Colonic mucosa (tissue), 4 donors: ENCODE measurements at regions of chr1 and their contacts with region 1.

Region 1: DNA sequence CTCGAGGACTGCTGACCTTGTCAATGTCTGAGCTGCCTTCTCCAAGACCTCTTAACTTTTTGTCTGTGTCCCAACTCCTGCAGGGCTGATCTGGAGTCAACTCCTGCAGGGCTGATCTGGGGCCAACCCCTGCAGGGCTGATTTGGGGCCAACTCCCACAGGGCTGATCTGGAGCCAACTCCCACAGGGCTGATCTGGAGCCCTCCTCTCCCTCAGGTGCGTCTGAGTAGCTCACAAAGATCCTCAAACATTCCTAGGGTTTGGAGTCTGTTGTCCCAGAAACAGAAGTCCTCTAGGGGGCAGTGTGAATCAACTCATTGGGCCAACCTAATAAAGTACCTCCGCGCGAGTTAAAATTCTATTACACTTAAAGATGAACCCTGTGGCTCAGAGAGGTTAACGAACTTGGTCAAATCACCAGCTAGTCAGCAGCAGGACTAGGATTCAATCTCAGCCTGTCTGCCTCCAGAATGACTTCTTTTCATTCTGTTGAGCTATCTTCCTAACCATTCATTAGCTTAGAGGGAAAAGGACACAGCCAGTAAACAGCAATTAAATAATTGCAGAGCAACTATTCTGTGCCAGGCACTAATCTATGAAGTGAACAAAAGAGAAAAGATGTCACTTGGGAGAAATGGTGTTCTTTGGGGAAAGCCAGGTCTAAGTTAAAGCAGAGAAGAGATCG is 17.2 kb upstream of the RLF start:
- DNase-seq: peak; percentile 73
- H3K4me3 ChIP-seq: no peak overlapping the region
- H3K27ac ChIP-seq: no peak overlapping the region
- H3K4me1 ChIP-seq: no peaks in the 10 kb centered on the region
- H3K27me3 ChIP-seq: no peaks in the 10 kb centered on the region
- CTCF ChIP-seq: peak; percentile 60

Region 2: DNA sequence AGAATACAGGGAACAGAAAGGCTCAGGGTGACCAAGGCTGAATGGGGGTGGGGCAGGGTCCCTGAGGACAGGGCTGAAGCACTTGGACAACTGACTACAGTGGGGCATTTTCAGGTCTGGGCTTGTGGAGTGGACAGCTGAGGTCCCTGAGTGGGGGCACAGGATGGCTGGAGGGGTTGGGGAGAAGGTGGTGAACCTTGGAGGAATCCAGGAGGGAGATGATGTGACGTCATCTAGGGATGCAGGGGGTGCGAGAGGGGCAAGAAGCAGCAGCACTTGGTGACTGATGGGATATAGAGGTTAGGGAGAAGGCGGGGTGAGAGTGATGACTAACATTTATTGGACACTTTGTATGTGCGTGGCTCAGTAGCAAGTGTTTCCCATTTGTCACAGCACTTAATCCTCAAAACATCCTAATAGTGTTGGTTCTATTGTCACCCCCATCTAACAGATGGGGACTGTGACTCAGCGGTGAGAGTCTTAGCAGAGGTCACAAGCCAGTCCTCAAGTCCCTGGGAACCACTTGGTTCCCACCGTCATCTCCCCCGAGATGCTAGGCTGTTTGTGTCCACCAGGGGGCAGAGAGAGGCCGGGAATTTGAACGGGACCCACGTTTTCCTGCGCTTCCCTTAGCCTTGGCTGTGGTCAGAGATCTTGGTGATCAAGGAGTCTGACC is 327.5 kb before region 1 on chr1:
- intact Hi-C with region 1: no loop called
- DNase-seq: peak; percentile 82
- H3K4me3 ChIP-seq: no peak overlapping the region
- H3K27ac ChIP-seq: no peak overlapping the region
- H3K4me1 ChIP-seq: peaks cover 12% of the 10 kb centered on the region
- H3K27me3 ChIP-seq: no peaks in the 10 kb centered on the region
- CTCF ChIP-seq: peak; percentile 69

Region 3: GRCh38 chr1:39933956-39934941 is 209.8 kb before region 1 on chr1:
- intact Hi-C with region 1: no loop called
- DNase-seq: peak; percentile 92
- H3K4me3 ChIP-seq: no peak overlapping the region
- H3K27ac ChIP-seq: peak overlapping the region; percentile 84
- H3K4me1 ChIP-seq: peaks cover 9% of the 10 kb centered on the region
- H3K27me3 ChIP-seq: no peaks in the 10 kb centered on the region
- CTCF ChIP-seq: no peak

Region 4: GRCh38 chr1:40185951-40186864 is 42.2 kb after region 1 on chr1:
- intact Hi-C with region 1: no loop called
- DNase-seq: no peak
- H3K4me3 ChIP-seq: no peak overlapping the region
- H3K27ac ChIP-seq: no peak overlapping the region
- H3K4me1 ChIP-seq: no peaks in the 10 kb centered on the region
- H3K27me3 ChIP-seq: no peaks in the 10 kb centered on the region
- CTCF ChIP-seq: no peak

Region 5: GRCh38 chr1:40404670-40405462 is 260.8 kb after region 1 on chr1:
- intact Hi-C with region 1: loop called (anchors 5 kb)
- DNase-seq: no peak
- H3K4me3 ChIP-seq: no peak overlapping the region
- H3K27ac ChIP-seq: no peak overlapping the region
- H3K4me1 ChIP-seq: no peaks in the 10 kb centered on the region
- H3K27me3 ChIP-seq: no peaks in the 10 kb centered on the region
- CTCF ChIP-seq: peak; percentile 73